Endothelial cell of umbilical vein (primary cell): ENCODE measurements at regions of chr12 and their contacts with region 1.

Region 1: GRCh38 chr12:91991399-91992187 is 154.1 kb downstream of the BTG1 start:
- DNase-seq: peak; percentile 55
- H3K4me3 ChIP-seq: no peak overlapping the region
- H3K27ac ChIP-seq: peak overlapping the region; percentile 94
- H3K4me1 ChIP-seq: peaks cover 69% of the 10 kb centered on the region
- H3K27me3 ChIP-seq: no peaks in the 10 kb centered on the region
- CTCF ChIP-seq: no peak
- POLR2A ChIP-seq: no peak

Region 2: DNA sequence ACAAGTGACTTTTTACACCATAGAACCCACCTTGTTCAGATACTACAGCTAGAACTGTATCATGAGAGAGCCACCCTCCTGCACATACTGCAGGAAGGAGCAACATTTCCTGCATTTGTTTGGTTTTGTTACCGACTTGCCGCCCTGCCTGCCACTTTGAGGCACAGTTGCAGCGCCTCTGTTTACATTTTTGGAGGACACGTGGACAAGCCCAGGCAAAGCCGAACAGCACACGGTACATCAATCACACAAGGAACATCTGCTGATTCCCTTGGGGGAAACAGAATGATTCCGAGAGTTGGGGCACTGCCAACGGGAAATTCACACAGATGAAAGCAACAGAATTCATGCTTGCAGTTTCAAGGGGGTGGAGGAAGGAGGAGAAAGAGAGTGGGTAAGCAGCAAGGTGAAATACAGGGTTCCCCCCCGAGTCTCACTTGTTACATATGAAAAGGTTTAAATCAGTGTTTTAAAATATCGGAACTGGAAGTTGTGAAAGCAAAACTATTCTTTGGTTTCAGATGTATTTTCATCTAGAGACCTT is 43.3 kb after region 1 on chr12:
- CTCF ChIA-PET with region 1: interaction called, 3 read pairs
- POLR2A ChIA-PET with region 1: no interaction called
- dilution Hi-C with region 1: no loop called
- intact Hi-C with region 1: loop called (anchors 1 kb)
- DNase-seq: peak; percentile 87
- H3K4me3 ChIP-seq: peak overlapping the region in 1 of 3 experiments; percentile 21
- H3K27ac ChIP-seq: peak overlapping the region; percentile 22
- H3K4me1 ChIP-seq: peaks cover 17% of the 10 kb centered on the region
- H3K27me3 ChIP-seq: no peaks in the 10 kb centered on the region
- CTCF ChIP-seq: no peak
- POLR2A ChIP-seq: no peak

Region 3: GRCh38 chr12:92208613-92209121 is 217.1 kb after region 1 on chr12:
- CTCF ChIA-PET with region 1: no interaction called
- POLR2A ChIA-PET with region 1: no interaction called
- dilution Hi-C with region 1: no loop called
- intact Hi-C with region 1: loop called (anchors 1 kb)
- DNase-seq: peak; percentile 97
- H3K4me3 ChIP-seq: peak overlapping the region in 1 of 3 experiments; percentile 47
- H3K27ac ChIP-seq: peak overlapping the region; percentile 82
- H3K4me1 ChIP-seq: peaks cover 13% of the 10 kb centered on the region
- H3K27me3 ChIP-seq: no peaks in the 10 kb centered on the region
- CTCF ChIP-seq: no peak
- POLR2A ChIP-seq: no peak

Region 4: DNA sequence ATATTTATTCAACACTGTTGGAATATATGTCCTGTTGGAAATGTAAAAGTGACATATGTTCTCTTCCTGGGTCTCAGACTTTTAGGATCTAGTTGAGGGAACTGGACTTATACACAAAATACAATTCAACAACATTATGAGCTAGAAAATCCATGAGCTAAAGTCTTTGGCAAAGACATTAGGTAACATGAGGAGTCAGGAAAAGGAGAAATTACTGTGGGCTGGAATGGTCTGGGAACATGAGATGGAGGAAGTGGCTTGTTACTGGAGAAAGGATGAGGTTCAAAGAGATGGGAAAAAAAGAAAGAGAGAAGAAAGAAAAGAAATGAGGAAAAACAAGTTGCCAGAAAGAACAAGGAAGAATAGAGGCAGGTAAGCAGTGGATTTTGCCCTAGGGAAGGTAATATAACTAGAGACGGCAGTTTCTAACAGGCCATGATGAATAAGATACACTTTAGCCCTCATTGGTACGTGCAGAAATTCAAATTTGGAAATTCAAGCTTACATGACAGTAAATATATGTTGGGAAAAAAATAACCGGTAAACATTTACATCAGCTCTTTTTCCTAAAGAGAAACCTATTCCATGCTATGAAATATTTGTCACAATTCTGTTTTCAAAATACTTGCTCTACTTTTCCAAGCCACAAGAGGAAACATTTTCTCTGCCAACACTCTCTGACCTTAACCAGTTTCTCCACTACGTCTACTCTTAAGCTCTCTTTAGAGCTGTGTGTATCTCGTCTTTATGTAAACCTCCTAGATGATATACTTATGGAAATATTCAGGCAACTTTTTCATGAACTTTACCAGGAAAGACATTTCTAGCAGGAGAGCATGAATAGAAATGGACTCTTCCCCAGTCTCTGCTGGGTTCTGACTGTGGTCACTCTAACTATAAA is 422.8 kb after region 1 on chr12:
- CTCF ChIA-PET with region 1: no interaction called
- POLR2A ChIA-PET with region 1: no interaction called
- dilution Hi-C with region 1: no loop called
- intact Hi-C with region 1: loop called (anchors 5 kb)
- DNase-seq: peak; percentile 7
- H3K4me3 ChIP-seq: no peak overlapping the region
- H3K27ac ChIP-seq: no peak overlapping the region
- H3K4me1 ChIP-seq: peaks cover 16% of the 10 kb centered on the region
- H3K27me3 ChIP-seq: no peaks in the 10 kb centered on the region
- CTCF ChIP-seq: no peak
- POLR2A ChIP-seq: no peak

Region 5: DNA sequence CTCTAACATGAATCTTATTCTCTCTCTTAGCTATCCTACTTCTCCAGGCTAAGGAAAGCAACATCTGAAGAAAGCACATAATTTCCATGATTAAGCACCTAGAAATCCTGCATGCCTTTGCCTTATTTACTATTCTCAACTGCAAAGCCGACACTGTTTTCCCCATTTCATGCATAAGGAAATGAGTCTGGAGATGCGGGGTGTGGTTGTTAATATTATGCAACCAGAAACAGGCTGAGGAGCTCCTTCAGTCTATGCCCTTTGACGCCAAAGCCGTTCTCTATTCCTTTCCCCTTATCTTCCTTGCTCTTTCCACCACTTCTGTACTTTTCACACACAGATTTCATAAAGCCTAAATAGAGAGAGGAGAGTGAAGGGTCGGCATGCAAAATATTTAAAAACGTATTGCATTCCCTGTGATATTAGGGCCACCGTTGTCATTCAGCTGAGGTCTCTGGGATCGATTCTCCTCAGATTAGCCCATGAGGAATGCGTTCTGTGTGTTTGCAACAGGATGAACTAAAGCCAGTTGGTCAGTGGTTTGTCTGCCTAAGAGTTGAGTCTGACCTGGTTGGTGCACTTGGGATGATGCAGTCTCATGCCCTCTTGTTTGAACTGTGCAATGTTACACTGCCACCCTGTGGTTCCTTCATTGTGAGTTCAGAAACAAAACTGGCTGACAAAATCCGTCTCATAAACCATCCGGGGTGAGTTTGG is 658.1 kb after region 1 on chr12:
- CTCF ChIA-PET with region 1: no interaction called
- POLR2A ChIA-PET with region 1: no interaction called
- dilution Hi-C with region 1: no loop called
- intact Hi-C with region 1: loop called (anchors 2 kb)
- DNase-seq: peak; percentile 75
- H3K4me3 ChIP-seq: no peak overlapping the region
- H3K27ac ChIP-seq: no peak overlapping the region
- H3K4me1 ChIP-seq: no peaks in the 10 kb centered on the region
- H3K27me3 ChIP-seq: no peaks in the 10 kb centered on the region
- CTCF ChIP-seq: peak; percentile 69 to 70
- POLR2A ChIP-seq: no peak